Sigmoid colon (tissue), 7 donors: ENCODE measurements at regions of chr5 and their contacts with region 1.

Region 1: DNA sequence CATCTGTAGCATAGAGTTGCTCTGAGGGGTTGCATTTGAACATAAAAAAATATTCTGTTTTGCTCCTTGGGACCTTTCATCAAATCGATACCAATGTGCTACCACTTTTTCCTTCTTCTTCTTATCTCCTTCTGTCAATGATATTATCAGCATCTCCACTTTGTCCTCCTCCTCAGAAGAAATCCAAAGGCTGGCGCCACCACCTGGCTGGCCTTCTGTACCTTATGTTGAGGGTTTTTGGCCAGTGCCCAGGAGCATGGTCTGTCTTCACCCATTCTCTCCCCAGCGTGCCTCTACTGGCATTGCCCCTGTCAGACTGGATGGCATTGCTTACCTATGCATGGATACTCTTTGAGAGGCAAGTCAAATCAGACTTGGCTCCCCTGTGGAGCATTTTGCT is 167.2 kb downstream of the CFAP90 start:
- DNase-seq: no peak
- H3K4me3 ChIP-seq: no peak overlapping the region
- H3K27ac ChIP-seq: no peak overlapping the region
- H3K4me1 ChIP-seq: peaks cover 0 to 35% (median 4%) of the 10 kb centered on the region in 4 donors
- H3K27me3 ChIP-seq: no peaks in the 10 kb centered on the region
- CTCF ChIP-seq: no peak
- EP300 ChIP-seq: no peak
- POLR2A ChIP-seq: no peak

Region 2: GRCh38 chr5:7576023-7576715 is 107.6 kb before region 1 on chr5:
- intact Hi-C with region 1: loop called (anchors 5 kb)
- DNase-seq: peak; percentile 82
- H3K4me3 ChIP-seq: no peak overlapping the region
- H3K27ac ChIP-seq: peak overlapping the region in 3 of 4 donors; percentile 56 to 66 (median 64)
- H3K4me1 ChIP-seq: peaks cover 0 to 28% (median 23%) of the 10 kb centered on the region in 4 donors
- H3K27me3 ChIP-seq: no peaks in the 10 kb centered on the region
- CTCF ChIP-seq: no peak
- EP300 ChIP-seq: peak in 3 of 4 donors; percentile 3 to 75 (median 4)
- POLR2A ChIP-seq: no peak

Region 3: GRCh38 chr5:7642029-7642428 is 41.7 kb before region 1 on chr5:
- intact Hi-C with region 1: loop called (anchors 5 kb)
- DNase-seq: no peak
- H3K4me3 ChIP-seq: no peak overlapping the region
- H3K27ac ChIP-seq: no peak overlapping the region
- H3K4me1 ChIP-seq: peaks cover 0 to 8% (median 3%) of the 10 kb centered on the region in 4 donors
- H3K27me3 ChIP-seq: no peaks in the 10 kb centered on the region
- CTCF ChIP-seq: no peak
- EP300 ChIP-seq: no peak
- POLR2A ChIP-seq: no peak